ENCODE measurements at regions of chr13 and their contacts with region 1.

Region 1: GRCh38 chr13:51286135-51287002 is 53.1 kb upstream of the SERPINE3 start:
- DNase-seq: no peak

Region 2: GRCh38 chr13:51125498-51126226 is 160.7 kb before region 1 on chr13:
- intact Hi-C with region 1: loop called (anchors 5 kb)
- DNase-seq: no peak

Region 3: GRCh38 chr13:51148952-51149573 is 137.3 kb before region 1 on chr13:
- intact Hi-C with region 1: loop called (anchors 2 kb)
- DNase-seq: no peak

Region 4: GRCh38 chr13:51222037-51222685 is 64.2 kb before region 1 on chr13 and contains the start of gene FAM124A:
- intact Hi-C with region 1: loop called (anchors 1 kb)
- DNase-seq: no peak
- total RNA-seq, gene FAM124A: 4.6 TPM

Region 5: DNA sequence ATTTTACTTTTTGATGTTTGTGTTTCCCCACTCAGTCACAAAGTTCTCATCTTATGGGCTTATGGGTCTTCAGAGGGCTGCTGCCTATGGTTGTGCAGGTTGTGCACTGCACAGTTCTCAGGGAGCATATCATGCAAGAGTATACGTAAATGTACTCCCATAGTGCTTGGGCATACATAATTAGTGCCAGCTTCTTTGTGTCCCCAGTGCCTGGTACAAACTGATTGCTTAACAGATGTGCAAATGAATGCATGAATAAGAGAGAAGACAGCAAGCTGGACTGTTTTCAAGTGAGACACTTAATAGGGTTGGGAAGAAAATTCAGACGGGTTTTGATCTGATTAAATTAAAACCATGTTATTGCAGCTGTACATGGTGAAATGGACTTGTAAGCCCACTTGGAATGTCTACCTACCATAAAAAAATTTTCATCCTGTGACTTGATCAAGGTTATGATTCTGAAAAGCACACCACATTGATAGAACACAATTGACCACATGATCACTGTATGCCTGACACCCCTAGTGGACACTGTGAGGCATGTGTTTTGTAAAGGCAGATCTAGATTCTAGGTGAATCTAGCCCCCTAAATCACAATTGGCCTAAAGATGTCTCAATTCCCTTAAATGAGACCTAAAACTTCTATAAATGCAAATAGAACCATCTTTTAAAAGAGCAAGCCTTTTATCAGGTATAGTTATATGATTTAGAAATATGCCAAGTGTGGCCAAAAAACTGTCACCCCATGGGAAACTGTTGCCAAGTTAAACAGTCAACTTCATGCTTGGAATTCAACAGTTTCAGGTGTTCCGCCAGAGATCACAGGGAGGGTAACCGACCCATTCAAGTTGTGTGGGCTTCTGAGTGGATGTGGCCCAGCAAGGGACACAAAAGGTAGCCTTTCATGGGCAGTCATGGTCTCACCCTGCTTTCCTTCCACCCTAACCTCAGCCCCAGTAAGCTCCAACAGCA is 36.3 kb before region 1 on chr13:
- intact Hi-C with region 1: loop called (anchors 5 kb)
- DNase-seq: no peak